Activated CD4-positive, alpha-beta T cell treated with anti-CD3 and anti-CD28 coated beads for 36 hours (primary cell): ENCODE measurements at regions of chr6 and their contacts with region 1.

Region 1: GRCh38 chr6:105898286-105898685 is 187.8 kb upstream of the PRDM1 start:
- DNase-seq: peak; percentile 43
- ATAC-seq: peak; percentile 62
- H3K4me3 Mint-ChIP-seq: no peak overlapping the region
- H3K27ac Mint-ChIP-seq: no peak overlapping the region
- H3K4me1 Mint-ChIP-seq: peaks cover 24% of the 10 kb centered on the region
- H3K27me3 Mint-ChIP-seq: peaks cover 4% of the 10 kb centered on the region

Region 2: DNA sequence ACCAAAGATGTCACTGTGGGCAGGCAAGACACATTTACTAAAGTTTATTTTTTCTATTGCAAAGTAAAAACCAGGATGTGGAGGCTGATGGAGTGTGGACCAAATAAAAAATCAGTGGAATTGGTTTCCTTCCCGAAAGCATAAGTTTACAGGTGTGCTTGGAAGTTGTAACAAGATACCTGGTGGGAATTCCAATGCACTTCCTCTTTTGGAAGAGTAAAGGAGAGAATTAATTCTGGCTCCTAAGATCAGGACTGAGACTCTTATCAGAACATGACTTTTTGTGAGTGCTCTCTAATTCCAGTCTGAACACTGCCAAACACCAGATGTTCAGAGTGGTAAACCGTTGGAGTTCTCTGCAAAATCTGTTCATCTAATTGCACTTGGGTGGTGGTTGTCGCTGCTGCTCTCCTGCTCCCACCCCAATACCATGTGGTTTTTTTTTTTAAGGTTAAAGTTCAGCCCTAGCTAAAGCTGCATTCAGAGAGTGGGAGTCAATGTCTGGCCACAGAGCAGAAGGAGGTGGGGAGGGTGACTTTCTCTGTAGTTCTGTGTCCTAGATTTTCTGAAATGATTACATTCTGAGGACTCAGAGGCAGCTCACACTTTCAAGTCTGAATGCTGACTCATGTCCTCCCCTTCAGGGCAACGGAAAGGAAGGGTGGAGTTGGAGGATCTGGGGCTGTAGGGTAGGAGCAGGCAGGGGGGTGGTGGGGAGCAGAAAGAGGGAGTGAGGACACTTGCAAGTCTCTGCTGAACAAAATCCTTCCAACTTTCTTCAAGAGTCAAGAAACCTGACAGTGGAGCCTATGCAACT is 88.0 kb before region 1 on chr6:
- CTCF ChIA-PET with region 1: interaction called, 3 read pairs
- POLR2A ChIA-PET with region 1: no interaction called
- intact Hi-C with region 1: loop called in 1 of 2 experiments (anchors 1 kb)
- DNase-seq: peak; percentile 78
- ATAC-seq: peak; percentile 90
- H3K4me3 Mint-ChIP-seq: no peak overlapping the region
- H3K27ac Mint-ChIP-seq: no peak overlapping the region
- H3K4me1 Mint-ChIP-seq: peaks cover 37% of the 10 kb centered on the region
- H3K27me3 Mint-ChIP-seq: peaks cover 6% of the 10 kb centered on the region

Region 3: DNA sequence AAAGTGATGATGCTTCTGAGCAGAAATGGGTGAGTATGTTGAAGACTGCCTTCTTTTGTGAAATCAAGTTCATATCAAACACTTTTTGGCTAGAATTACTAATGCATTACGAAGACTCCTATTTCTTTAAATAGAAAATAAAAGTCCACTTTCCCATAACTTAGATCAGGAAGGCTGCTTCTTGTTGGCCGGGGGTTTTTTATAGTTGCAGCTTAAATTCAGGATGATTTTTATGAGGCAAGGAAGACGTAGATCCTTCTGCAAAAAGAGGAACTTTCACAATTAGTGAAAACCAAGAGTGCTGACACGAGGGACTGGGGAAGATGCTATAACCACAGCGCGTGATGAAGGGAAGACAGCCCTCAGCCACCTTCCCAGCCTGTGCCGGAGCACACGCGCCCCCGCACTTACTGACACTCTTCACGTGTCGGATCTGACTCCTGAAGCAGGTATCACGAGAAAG is 18.2 kb before region 1 on chr6:
- CTCF ChIA-PET with region 1: interaction called, 7 read pairs
- POLR2A ChIA-PET with region 1: no interaction called
- intact Hi-C with region 1: loop called in 1 of 2 experiments (anchors 2 kb)
- DNase-seq: peak; percentile 71
- ATAC-seq: peak; percentile 91
- H3K4me3 Mint-ChIP-seq: peak overlapping the region; percentile 3
- H3K27ac Mint-ChIP-seq: no peak overlapping the region
- H3K4me1 Mint-ChIP-seq: peaks cover 15% of the 10 kb centered on the region
- H3K27me3 Mint-ChIP-seq: peaks cover 27% of the 10 kb centered on the region

Region 4: GRCh38 chr6:105920071-105920470 is 21.8 kb after region 1 on chr6:
- CTCF ChIA-PET with region 1: interaction called, 3 read pairs
- POLR2A ChIA-PET with region 1: interaction called, 9 read pairs
- intact Hi-C with region 1: loop called (anchors 1 kb)
- DNase-seq: peak; percentile 29
- ATAC-seq: peak; percentile 88
- H3K4me3 Mint-ChIP-seq: no peak overlapping the region
- H3K27ac Mint-ChIP-seq: peak overlapping the region; percentile 26
- H3K4me1 Mint-ChIP-seq: peaks cover 10% of the 10 kb centered on the region
- H3K27me3 Mint-ChIP-seq: peaks cover 11% of the 10 kb centered on the region

Region 5: GRCh38 chr6:105992315-105992961 is 94.2 kb after region 1 on chr6:
- CTCF ChIA-PET with region 1: interaction called, 3 read pairs
- POLR2A ChIA-PET with region 1: interaction called, 11 read pairs
- intact Hi-C with region 1: no loop called
- DNase-seq: peak; percentile 94
- ATAC-seq: peak; percentile 93
- H3K4me3 Mint-ChIP-seq: peak overlapping the region; percentile 88
- H3K27ac Mint-ChIP-seq: peak overlapping the region; percentile 91
- H3K4me1 Mint-ChIP-seq: peaks cover 32% of the 10 kb centered on the region
- H3K27me3 Mint-ChIP-seq: peaks cover 61% of the 10 kb centered on the region

Region 6: DNA sequence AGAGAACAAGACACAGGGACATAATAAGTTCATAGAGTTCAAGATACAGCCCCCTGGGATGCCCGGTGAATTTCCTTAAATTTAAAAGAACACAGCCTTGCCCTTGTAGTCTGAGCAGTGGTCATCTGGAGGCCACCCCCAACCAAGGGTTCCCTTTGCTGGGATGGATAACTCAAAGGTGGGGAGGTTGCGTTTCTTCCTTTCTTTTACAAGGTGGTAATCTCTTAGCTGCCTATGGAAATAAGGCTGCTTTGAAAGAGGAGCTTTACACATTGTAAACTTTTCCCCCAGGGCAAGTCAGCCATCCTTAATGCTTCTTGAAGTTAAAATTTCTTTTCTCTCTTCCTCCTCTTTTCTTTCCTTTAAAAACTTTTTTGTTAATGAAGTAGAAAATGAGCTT is 116.6 kb after region 1 on chr6:
- CTCF ChIA-PET with region 1: no interaction called
- POLR2A ChIA-PET with region 1: no interaction called
- intact Hi-C with region 1: no loop called
- DNase-seq: no peak
- ATAC-seq: no peak
- H3K4me3 Mint-ChIP-seq: no peak overlapping the region
- H3K27ac Mint-ChIP-seq: no peak overlapping the region
- H3K4me1 Mint-ChIP-seq: no peaks in the 10 kb centered on the region
- H3K27me3 Mint-ChIP-seq: peaks cover 7% of the 10 kb centered on the region